ENCODE measurements at regions of chr5 and their contacts with region 1.

Region 1: GRCh38 chr5:150700594-150701293 is at the start of gene RBM22:
- DNase-seq: peak; percentile 84
- ATAC-seq: peak; percentile 95
- H3K4me3 Mint-ChIP-seq: no peak within 1 kb of the TSS
- H3K27ac Mint-ChIP-seq: no peak within 1 kb of the TSS
- H3K4me1 Mint-ChIP-seq: peaks cover 6% of the 10 kb centered on the region
- H3K27me3 Mint-ChIP-seq: no peaks in the 10 kb centered on the region
- CTCF ChIP-seq: no peak
- total RNA-seq, gene RBM22: 74.0 and 74.1 TPM in 2 replicates

Region 2: DNA sequence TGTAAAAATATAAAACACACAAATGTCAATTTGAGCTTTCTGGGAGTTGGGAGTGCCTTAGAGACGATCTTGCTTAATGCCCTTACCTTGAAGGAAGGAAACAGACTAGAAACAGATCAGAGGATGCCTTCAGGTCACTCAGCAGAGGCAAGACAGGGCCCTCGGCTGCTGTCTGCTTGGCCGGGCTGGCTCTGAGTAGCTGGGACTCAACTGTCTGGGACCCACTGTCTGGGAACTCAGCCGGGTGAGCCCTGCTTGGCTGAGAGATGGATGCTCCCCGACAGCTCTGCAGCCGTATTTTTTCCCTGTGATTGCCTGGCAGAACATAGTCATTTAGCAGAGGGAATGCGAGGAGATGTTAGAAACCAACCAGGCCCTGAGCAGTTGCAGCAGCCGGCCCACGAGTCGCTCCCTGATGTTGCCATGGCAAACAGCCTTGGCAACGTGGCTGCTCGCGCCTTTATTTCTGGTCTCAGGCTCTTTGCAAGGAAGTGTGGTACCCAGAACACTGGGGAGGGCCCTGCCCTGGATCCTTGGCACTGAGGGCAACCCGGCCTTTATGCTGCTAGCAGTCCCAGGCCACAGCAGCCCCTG is 959.8 kb before region 1 on chr5:
- CTCF ChIA-PET with region 1: no interaction called
- POLR2A ChIA-PET with region 1: no interaction called
- intact Hi-C with region 1: no loop called
- DNase-seq: no peak
- ATAC-seq: no peak
- H3K4me3 Mint-ChIP-seq: no peak overlapping the region
- H3K27ac Mint-ChIP-seq: no peak overlapping the region
- H3K4me1 Mint-ChIP-seq: no peaks in the 10 kb centered on the region
- H3K27me3 Mint-ChIP-seq: no peaks in the 10 kb centered on the region
- CTCF ChIP-seq: no peak

Region 3: GRCh38 chr5:150357326-150358260 is 343.2 kb before region 1 on chr5 and contains the start of gene TCOF1:
- CTCF ChIA-PET with region 1: no interaction called
- POLR2A ChIA-PET with region 1: no interaction called
- intact Hi-C with region 1: loop called (anchors 1 kb)
- DNase-seq: peak; percentile 98
- ATAC-seq: peak; percentile 97
- H3K4me3 Mint-ChIP-seq: peak within 1 kb of the TSS; percentile 89
- H3K27ac Mint-ChIP-seq: peak within 1 kb of the TSS; percentile 93
- H3K4me1 Mint-ChIP-seq: peaks cover 49% of the 10 kb centered on the region
- H3K27me3 Mint-ChIP-seq: no peaks in the 10 kb centered on the region
- CTCF ChIP-seq: no peak
- total RNA-seq, gene TCOF1: 74.7 and 76.1 TPM in 2 replicates

Region 4: DNA sequence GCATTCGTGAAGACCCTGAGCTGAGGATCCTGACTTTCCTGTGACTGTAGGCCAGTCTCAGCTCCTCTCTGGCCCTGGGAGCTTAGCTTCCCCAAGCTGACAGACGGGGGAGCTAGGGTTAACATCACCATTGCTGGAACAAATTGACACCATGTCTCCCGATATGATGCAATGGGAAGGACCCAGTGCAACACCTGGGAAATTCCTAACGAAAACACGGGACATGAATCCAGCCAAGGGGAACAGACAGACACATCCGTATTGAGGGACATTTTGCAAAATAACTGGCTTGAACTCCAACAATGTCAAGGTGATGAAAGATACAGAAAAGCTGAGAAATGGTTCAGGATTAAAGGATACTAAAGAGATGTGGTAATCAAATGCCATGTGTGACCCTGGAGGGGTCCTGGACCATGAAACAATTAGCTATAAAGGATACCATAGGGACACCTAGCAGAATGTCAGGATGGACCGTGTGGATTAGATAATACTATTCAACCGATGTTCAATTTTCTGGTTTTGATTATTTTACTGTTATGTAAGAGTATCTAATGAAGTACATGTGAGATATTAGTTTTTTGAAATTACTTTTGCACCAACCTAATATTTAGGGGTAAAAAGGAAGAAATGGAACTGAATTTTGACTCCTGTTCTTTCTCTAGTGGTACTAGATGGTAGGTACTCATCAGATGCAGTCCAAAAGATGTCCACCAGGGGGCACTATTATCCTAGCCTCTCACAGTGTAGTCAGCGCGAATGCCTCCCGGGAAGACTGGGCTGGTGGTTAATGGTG is 140.1 kb before region 1 on chr5:
- CTCF ChIA-PET with region 1: interaction called, 22 read pairs
- POLR2A ChIA-PET with region 1: interaction called, 12 read pairs
- intact Hi-C with region 1: no loop called
- DNase-seq: peak; percentile 36
- ATAC-seq: peak; percentile 98
- H3K4me3 Mint-ChIP-seq: no peak overlapping the region
- H3K27ac Mint-ChIP-seq: no peak overlapping the region
- H3K4me1 Mint-ChIP-seq: peaks cover 7% of the 10 kb centered on the region
- H3K27me3 Mint-ChIP-seq: no peaks in the 10 kb centered on the region
- CTCF ChIP-seq: peak; percentile 44

Region 5: GRCh38 chr5:150656191-150657132 is 44.3 kb before region 1 on chr5:
- CTCF ChIA-PET with region 1: no interaction called
- POLR2A ChIA-PET with region 1: interaction called, 8 read pairs
- intact Hi-C with region 1: loop called (anchors 2 kb)
- DNase-seq: peak; percentile 84
- ATAC-seq: peak; percentile 93
- H3K4me3 Mint-ChIP-seq: peak overlapping the region; percentile 81
- H3K27ac Mint-ChIP-seq: no peak overlapping the region
- H3K4me1 Mint-ChIP-seq: peaks cover 16% of the 10 kb centered on the region
- H3K27me3 Mint-ChIP-seq: no peaks in the 10 kb centered on the region
- CTCF ChIP-seq: peak; percentile 23

Region 6: GRCh38 chr5:150846654-150847333 is 146.1 kb after region 1 on chr5:
- CTCF ChIA-PET with region 1: interaction called, 7 read pairs
- POLR2A ChIA-PET with region 1: interaction called, 8 read pairs
- intact Hi-C with region 1: loop called (anchors 1 kb)
- DNase-seq: no peak
- ATAC-seq: peak; percentile 96
- H3K4me3 Mint-ChIP-seq: peak overlapping the region; percentile 81
- H3K27ac Mint-ChIP-seq: peak overlapping the region; percentile 55
- H3K4me1 Mint-ChIP-seq: peaks cover 10% of the 10 kb centered on the region
- H3K27me3 Mint-ChIP-seq: no peaks in the 10 kb centered on the region
- CTCF ChIP-seq: no peak

Measured in activated B cell treated with CpG ODN at 0.5 μM for 24 hours (primary cell).